ENCODE measurements at regions of chr9 and their contacts with region 1.

Region 1: DNA sequence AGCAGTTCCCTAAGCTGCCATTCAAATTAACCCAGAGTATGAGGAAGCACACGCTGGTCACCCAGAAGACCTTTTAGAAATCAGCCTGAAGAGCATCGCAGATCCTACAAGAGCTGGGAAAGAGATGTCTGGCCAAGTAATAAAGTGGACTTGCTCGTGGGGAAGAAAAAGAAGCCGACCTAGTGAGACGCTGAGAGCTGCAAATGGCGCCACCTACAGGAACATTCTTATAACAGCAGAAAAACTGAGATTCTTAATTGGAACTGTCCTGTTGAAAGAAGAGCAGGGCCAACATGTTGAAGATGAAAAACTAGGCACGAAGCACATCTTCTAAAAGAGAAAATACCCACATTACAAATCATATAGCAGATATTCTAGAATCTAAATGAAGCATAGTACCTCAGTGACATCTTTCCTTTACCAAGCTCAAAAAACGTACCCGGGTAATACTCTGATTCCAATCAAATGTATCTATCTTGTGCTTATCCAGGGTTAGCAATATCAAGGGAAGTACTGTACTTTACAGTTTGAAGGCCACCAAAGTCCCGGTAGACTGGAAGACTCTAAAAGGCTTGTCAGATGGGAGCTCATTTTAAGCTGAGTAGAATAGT is 3.9 kb upstream of the GNAQ start:
- DNase-seq: peak; percentile 76
- ATAC-seq: no peak
- H3K4me3 Mint-ChIP-seq: no peak overlapping the region
- H3K27ac Mint-ChIP-seq: no peak overlapping the region
- H3K4me1 Mint-ChIP-seq: peaks cover 32% of the 10 kb centered on the region
- H3K27me3 Mint-ChIP-seq: peaks cover 6% of the 10 kb centered on the region

Region 2: GRCh38 chr9:77456829-77457437 is 578.6 kb before region 1 on chr9:
- CTCF ChIA-PET with region 1: interaction called, 11 read pairs
- POLR2A ChIA-PET with region 1: no interaction called
- DNase-seq: peak; percentile 88
- ATAC-seq: peak; percentile 70
- H3K4me3 Mint-ChIP-seq: no peak overlapping the region
- H3K27ac Mint-ChIP-seq: no peak overlapping the region
- H3K4me1 Mint-ChIP-seq: peaks cover 13% of the 10 kb centered on the region
- H3K27me3 Mint-ChIP-seq: peaks cover 2% of the 10 kb centered on the region

Region 3: GRCh38 chr9:77707383-77708063 is 328.0 kb before region 1 on chr9:
- CTCF ChIA-PET with region 1: no interaction called
- POLR2A ChIA-PET with region 1: no interaction called
- DNase-seq: no peak
- ATAC-seq: no peak
- H3K4me3 Mint-ChIP-seq: no peak overlapping the region
- H3K27ac Mint-ChIP-seq: no peak overlapping the region
- H3K4me1 Mint-ChIP-seq: no peaks in the 10 kb centered on the region
- H3K27me3 Mint-ChIP-seq: no peaks in the 10 kb centered on the region

Region 4: DNA sequence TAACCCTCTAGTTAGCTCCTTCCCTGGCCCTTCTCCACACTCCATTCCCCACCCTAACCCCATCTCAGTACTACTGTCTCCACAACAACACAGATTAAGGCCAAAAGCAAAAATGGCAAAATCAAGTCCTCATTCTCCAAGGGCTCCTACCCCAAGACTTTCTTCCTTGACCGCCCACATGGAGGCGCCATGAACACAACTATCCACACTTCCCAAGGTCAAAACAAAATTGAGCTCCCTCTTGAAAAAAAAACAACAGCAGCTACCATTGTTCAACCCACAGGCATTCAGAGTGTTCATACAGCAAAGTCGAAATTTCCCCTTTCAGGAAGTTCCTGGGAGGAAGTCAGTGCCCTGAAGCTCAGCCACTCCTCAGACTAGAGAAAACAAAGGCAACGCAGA is 58.3 kb before region 1 on chr9:
- CTCF ChIA-PET with region 1: interaction called, 125 read pairs
- POLR2A ChIA-PET with region 1: interaction called, 20 read pairs
- DNase-seq: peak; percentile 69
- ATAC-seq: peak; percentile 48
- H3K4me3 Mint-ChIP-seq: peak overlapping the region; percentile 9
- H3K27ac Mint-ChIP-seq: peak overlapping the region; percentile 67
- H3K4me1 Mint-ChIP-seq: peaks cover 56% of the 10 kb centered on the region
- H3K27me3 Mint-ChIP-seq: no peaks in the 10 kb centered on the region

Region 5: GRCh38 chr9:78053627-78054026 is 18.1 kb after region 1 on chr9:
- CTCF ChIA-PET with region 1: interaction called, 39 read pairs
- POLR2A ChIA-PET with region 1: no interaction called
- DNase-seq: no peak
- ATAC-seq: peak; percentile 27
- H3K4me3 Mint-ChIP-seq: no peak overlapping the region
- H3K27ac Mint-ChIP-seq: no peak overlapping the region
- H3K4me1 Mint-ChIP-seq: peaks cover 24% of the 10 kb centered on the region
- H3K27me3 Mint-ChIP-seq: peaks cover 9% of the 10 kb centered on the region

Region 6: GRCh38 chr9:78097541-78097940 is 62.1 kb after region 1 on chr9:
- CTCF ChIA-PET with region 1: interaction called, 16 read pairs
- POLR2A ChIA-PET with region 1: no interaction called
- DNase-seq: no peak
- ATAC-seq: no peak
- H3K4me3 Mint-ChIP-seq: no peak overlapping the region
- H3K27ac Mint-ChIP-seq: no peak overlapping the region
- H3K4me1 Mint-ChIP-seq: peaks cover 17% of the 10 kb centered on the region
- H3K27me3 Mint-ChIP-seq: no peaks in the 10 kb centered on the region

Region 7: GRCh38 chr9:78121488-78121887 is 86.0 kb after region 1 on chr9:
- CTCF ChIA-PET with region 1: interaction called, 32 read pairs
- POLR2A ChIA-PET with region 1: no interaction called
- DNase-seq: peak; percentile 68
- ATAC-seq: no peak
- H3K4me3 Mint-ChIP-seq: no peak overlapping the region
- H3K27ac Mint-ChIP-seq: no peak overlapping the region
- H3K4me1 Mint-ChIP-seq: peaks cover 23% of the 10 kb centered on the region
- H3K27me3 Mint-ChIP-seq: peaks cover 8% of the 10 kb centered on the region